Calu3 (cell line): ENCODE measurements at regions of chr17 and their contacts with region 1.

Region 1: GRCh38 chr17:39828443-39828842 is 35.7 kb downstream of the IKZF3 start:
- DNase-seq: peak; percentile 100
- H3K4me3 Mint-ChIP-seq: peak overlapping the region; percentile 36
- H3K27ac Mint-ChIP-seq: peak overlapping the region; percentile 48
- H3K4me1 Mint-ChIP-seq: peaks cover 17% of the 10 kb centered on the region
- H3K27me3 Mint-ChIP-seq: no peaks in the 10 kb centered on the region
- CTCF ChIP-seq: no peak

Region 2: GRCh38 chr17:39636927-39637736 is 191.3 kb before region 1 on chr17 and contains the start of gene STARD3:
- CTCF ChIA-PET with region 1: interaction called, 120 read pairs
- intact Hi-C with region 1: no loop called
- DNase-seq: no peak
- H3K4me3 Mint-ChIP-seq: peak within 1 kb of the TSS; percentile 71
- H3K27ac Mint-ChIP-seq: peak within 1 kb of the TSS; percentile 28
- H3K4me1 Mint-ChIP-seq: peaks cover 61% of the 10 kb centered on the region
- H3K27me3 Mint-ChIP-seq: peaks cover 5% of the 10 kb centered on the region
- CTCF ChIP-seq: no peak
- total RNA-seq, gene STARD3: 2,579 and 2,697 TPM in 2 replicates

Region 3: DNA sequence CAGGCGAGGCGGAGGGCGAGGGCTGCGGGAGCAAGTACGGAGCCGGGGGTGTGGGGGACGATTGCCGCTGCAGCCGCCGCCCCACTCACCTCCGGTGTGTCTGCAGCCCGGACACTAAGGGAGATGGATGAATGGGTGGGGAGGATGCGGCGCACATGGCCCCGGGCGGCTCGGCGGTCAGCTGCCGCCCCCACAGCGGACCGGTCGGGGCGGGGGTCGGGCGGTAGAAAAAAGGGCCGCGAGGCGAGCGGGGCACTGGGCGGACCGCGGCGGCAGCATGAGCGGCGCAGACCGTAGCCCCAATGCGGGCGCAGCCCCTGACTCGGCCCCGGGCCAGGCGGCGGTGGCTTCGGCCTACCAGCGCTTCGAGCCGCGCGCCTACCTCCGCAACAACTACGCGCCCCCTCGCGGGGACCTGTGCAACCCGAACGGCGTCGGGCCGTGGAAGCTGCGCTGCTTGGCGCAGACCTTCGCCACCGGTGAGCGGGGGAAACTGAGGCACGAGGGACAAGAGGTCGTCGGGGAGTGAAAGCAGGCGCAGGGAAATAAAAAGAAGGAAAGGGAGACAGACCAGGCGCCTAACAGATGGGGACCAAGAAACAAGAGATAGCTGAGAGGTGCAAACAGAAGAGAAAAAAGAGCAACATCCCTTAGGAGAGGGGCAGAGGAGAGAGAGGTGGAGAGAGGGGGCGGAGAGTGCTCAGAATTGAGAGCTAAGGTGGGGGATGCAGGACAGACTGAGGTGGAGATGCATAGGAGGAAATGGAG is 160.1 kb before region 1 on chr17 and contains the start of gene PNMT:
- CTCF ChIA-PET with region 1: interaction called, 127 read pairs
- intact Hi-C with region 1: no loop called
- DNase-seq: peak; percentile 100
- H3K4me3 Mint-ChIP-seq: peak within 1 kb of the TSS; percentile 24
- H3K27ac Mint-ChIP-seq: peak within 1 kb of the TSS; percentile 0
- H3K4me1 Mint-ChIP-seq: peaks cover 65% of the 10 kb centered on the region
- H3K27me3 Mint-ChIP-seq: peaks cover 69% of the 10 kb centered on the region
- CTCF ChIP-seq: no peak
- total RNA-seq, gene PNMT: 1.3 and 3.2 TPM in 2 replicates

Region 4: GRCh38 chr17:39704821-39705551 is 123.5 kb before region 1 on chr17:
- CTCF ChIA-PET with region 1: interaction called, 146 read pairs
- intact Hi-C with region 1: loop called (anchors 1 kb)
- DNase-seq: peak; percentile 99
- H3K4me3 Mint-ChIP-seq: peak overlapping the region; percentile 71
- H3K27ac Mint-ChIP-seq: peak overlapping the region; percentile 67
- H3K4me1 Mint-ChIP-seq: peaks cover 92% of the 10 kb centered on the region
- H3K27me3 Mint-ChIP-seq: no peaks in the 10 kb centered on the region
- CTCF ChIP-seq: no peak

Region 5: GRCh38 chr17:39845052-39845846 is 16.8 kb after region 1 on chr17:
- CTCF ChIA-PET with region 1: interaction called, 809 read pairs
- intact Hi-C with region 1: loop called (anchors 1 kb)
- DNase-seq: peak; percentile 81
- H3K4me3 Mint-ChIP-seq: no peak overlapping the region
- H3K27ac Mint-ChIP-seq: no peak overlapping the region
- H3K4me1 Mint-ChIP-seq: peaks cover 10% of the 10 kb centered on the region
- H3K27me3 Mint-ChIP-seq: no peaks in the 10 kb centered on the region
- CTCF ChIP-seq: no peak

Region 6: GRCh38 chr17:39927101-39927928 is 98.9 kb after region 1 on chr17 and contains the starts of genes LRRC3C and ORMDL3:
- CTCF ChIA-PET with region 1: interaction called, 76 read pairs
- intact Hi-C with region 1: loop called (anchors 1 kb)
- DNase-seq: no peak
- H3K4me3 Mint-ChIP-seq: peak within 1 kb of the TSS; percentile 74
- H3K27ac Mint-ChIP-seq: peak within 1 kb of the TSS; percentile 66
- H3K4me1 Mint-ChIP-seq: peaks cover 60% of the 10 kb centered on the region
- H3K27me3 Mint-ChIP-seq: no peaks in the 10 kb centered on the region
- CTCF ChIP-seq: no peak
- total RNA-seq, gene LRRC3C: not detected in 2 replicates
- total RNA-seq, gene ORMDL3: 1,738 and 1,968 TPM in 2 replicates